ENCODE measurements at regions of chr5 and their contacts with region 1.

Region 1: DNA sequence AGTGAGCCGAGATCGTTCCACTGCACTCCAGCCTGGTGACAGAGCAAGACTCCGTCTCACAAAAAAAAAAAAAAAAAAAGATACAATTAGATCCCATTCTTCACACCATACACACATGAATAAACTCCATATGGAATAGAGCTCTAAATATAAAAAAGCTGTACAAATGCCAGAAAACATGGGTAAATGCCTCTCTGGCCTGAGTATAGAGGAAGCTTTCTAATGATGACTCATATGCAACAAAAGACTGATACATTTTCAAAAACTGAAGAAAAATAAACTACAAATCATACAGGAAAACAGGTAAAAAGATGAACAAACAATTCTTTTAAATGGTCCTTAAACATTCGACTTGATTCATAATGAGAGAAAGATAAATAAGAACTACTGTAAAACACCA is 8.6 kb downstream of the ZFP62 start:
- DNase-seq: no peak
- ATAC-seq: no peak
- H3K4me3 ChIP-seq: no peak overlapping the region
- H3K27ac ChIP-seq: no peak overlapping the region
- H3K4me1 ChIP-seq: no peaks in the 10 kb centered on the region
- H3K27me3 ChIP-seq: no peaks in the 10 kb centered on the region
- CTCF ChIP-seq: no peak

Region 2: DNA sequence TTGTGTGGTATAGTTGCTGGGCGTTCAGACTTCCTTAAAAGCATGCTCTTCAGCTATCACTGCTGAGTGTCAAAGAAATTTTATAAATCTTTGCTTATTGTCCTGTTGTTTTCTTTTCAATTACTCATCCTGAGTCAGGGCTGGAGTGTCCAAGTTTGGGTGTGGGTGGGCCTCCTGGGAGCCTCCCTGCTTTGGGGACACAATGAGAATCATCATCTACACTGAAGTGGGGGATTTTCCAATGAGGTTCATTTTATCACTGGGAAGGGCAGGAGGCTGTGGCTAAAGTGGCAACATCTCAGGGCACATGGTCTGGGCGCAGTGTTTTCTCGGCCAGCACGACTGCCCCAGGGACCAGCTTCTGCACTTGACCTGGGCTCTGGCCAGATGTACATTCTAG is 518.8 kb before region 1 on chr5:
- CTCF ChIA-PET with region 1: no interaction called
- POLR2A ChIA-PET with region 1: interaction called, 11 read pairs
- in situ Hi-C with region 1: no loop called
- intact Hi-C with region 1: no loop called
- DNase-seq: no peak
- ATAC-seq: peak; percentile 48
- H3K4me3 ChIP-seq: no peak overlapping the region
- H3K27ac ChIP-seq: no peak overlapping the region
- H3K4me1 ChIP-seq: peaks cover 3% of the 10 kb centered on the region
- H3K27me3 ChIP-seq: no peaks in the 10 kb centered on the region
- CTCF ChIP-seq: no peak

Region 3: GRCh38 chr5:180809403-180810209 is 42.9 kb before region 1 on chr5:
- CTCF ChIA-PET with region 1: interaction called, 10 read pairs
- POLR2A ChIA-PET with region 1: no interaction called
- in situ Hi-C with region 1: no loop called
- intact Hi-C with region 1: no loop called
- DNase-seq: peak; percentile 73
- ATAC-seq: peak; percentile 86
- H3K4me3 ChIP-seq: peak overlapping the region; percentile 64 to 89
- H3K27ac ChIP-seq: peak overlapping the region; percentile 97
- H3K4me1 ChIP-seq: peaks cover 49% of the 10 kb centered on the region
- H3K27me3 ChIP-seq: no peaks in the 10 kb centered on the region
- CTCF ChIP-seq: no peak

Region 4: DNA sequence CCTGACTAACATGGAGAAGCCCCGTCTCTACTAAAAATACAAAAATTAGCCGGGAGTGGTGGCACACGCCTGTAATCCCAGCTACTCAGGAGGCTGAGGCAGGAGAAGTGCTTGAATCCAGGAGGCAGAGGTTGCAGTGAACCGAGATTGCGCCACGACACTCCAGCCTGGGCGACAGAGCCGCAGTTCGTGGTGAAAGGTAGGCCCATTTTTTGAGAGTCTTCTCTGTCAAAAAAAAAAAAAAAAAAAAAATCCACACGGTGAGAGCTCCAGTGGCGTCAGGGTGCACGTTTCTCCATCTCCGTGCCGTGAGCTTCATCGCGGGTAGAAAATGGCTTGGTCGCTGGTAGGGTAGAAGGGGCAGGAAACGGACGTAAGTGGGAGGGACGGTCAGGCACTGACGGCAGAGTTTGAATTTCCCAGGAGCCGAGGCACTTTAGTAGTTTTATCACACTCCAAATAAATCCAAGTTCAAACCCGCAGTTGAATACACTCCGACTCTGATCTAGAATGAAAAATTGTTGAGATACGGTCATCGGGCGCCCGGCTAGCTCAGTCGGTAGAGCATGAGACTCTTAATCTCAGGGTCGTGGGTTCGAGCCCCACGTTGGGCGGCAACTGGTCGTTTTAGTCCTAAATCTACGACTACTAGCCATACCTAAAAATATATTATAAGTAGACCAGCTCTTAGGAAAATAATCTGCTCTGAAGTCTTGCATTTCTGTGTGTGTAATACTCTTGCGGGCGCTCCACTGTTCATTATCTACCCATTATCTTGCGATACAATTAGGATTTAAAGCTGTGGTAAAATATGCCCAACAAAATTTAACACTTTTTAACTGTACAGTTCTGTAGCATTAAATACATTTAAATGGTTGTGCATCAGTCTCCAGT is 355.0 kb after region 1 on chr5:
- CTCF ChIA-PET with region 1: no interaction called
- POLR2A ChIA-PET with region 1: interaction called, 10 read pairs
- in situ Hi-C with region 1: no loop called
- intact Hi-C with region 1: no loop called
- DNase-seq: peak; percentile 98
- ATAC-seq: peak; percentile 67
- H3K4me3 ChIP-seq: peak overlapping the region; percentile 52 to 78
- H3K27ac ChIP-seq: peak overlapping the region; percentile 75
- H3K4me1 ChIP-seq: peaks cover 17% of the 10 kb centered on the region
- H3K27me3 ChIP-seq: no peaks in the 10 kb centered on the region
- CTCF ChIP-seq: no peak

Measured in Panc1 (cell line).